Caco-2 (cell line): ENCODE measurements at regions of chr13 and their contacts with region 1.

Region 1: GRCh38 chr13:75876360-75877050 is 240.4 kb downstream of the LMO7 start:
- DNase-seq: peak; percentile 75 to 77
- H3K4me3 ChIP-seq: no peak overlapping the region
- H3K4me3 Mint-ChIP-seq: peak overlapping the region; percentile 23
- H3K27ac Mint-ChIP-seq: peak overlapping the region; percentile 33
- H3K4me1 ChIP-seq: peaks cover 10% of the 10 kb centered on the region
- H3K4me1 Mint-ChIP-seq: peaks cover 21% of the 10 kb centered on the region
- H3K27me3 ChIP-seq: no peaks in the 10 kb centered on the region
- H3K27me3 Mint-ChIP-seq: no peaks in the 10 kb centered on the region
- CTCF ChIP-seq: peak; percentile 89 to 95

Region 2: GRCh38 chr13:76016799-76017400 is 140.4 kb after region 1 on chr13:
- CTCF ChIA-PET with region 1: interaction called, 6 read pairs
- POLR2A ChIA-PET with region 1: no interaction called
- intact Hi-C with region 1: loop called (anchors 1 kb)
- DNase-seq: peak in 1 of 2 experiments; percentile 27
- H3K4me3 ChIP-seq: no peak overlapping the region
- H3K4me3 Mint-ChIP-seq: no peak overlapping the region
- H3K27ac Mint-ChIP-seq: peak overlapping the region; percentile 14
- H3K4me1 ChIP-seq: peaks cover 67% of the 10 kb centered on the region
- H3K4me1 Mint-ChIP-seq: peaks cover 40% of the 10 kb centered on the region
- H3K27me3 ChIP-seq: no peaks in the 10 kb centered on the region
- H3K27me3 Mint-ChIP-seq: no peaks in the 10 kb centered on the region
- CTCF ChIP-seq: peak in 1 of 2 experiments; percentile 44

Region 3: GRCh38 chr13:76048675-76049375 is 172.3 kb after region 1 on chr13:
- CTCF ChIA-PET with region 1: no interaction called
- POLR2A ChIA-PET with region 1: no interaction called
- intact Hi-C with region 1: loop called (anchors 1 kb)
- DNase-seq: peak in 1 of 2 experiments; percentile 29
- H3K4me3 ChIP-seq: no peak overlapping the region
- H3K4me3 Mint-ChIP-seq: peak overlapping the region; percentile 28
- H3K27ac Mint-ChIP-seq: peak overlapping the region; percentile 58
- H3K4me1 ChIP-seq: peaks cover 31% of the 10 kb centered on the region
- H3K4me1 Mint-ChIP-seq: peaks cover 19% of the 10 kb centered on the region
- H3K27me3 ChIP-seq: no peaks in the 10 kb centered on the region
- H3K27me3 Mint-ChIP-seq: no peaks in the 10 kb centered on the region
- CTCF ChIP-seq: no peak

Region 4: DNA sequence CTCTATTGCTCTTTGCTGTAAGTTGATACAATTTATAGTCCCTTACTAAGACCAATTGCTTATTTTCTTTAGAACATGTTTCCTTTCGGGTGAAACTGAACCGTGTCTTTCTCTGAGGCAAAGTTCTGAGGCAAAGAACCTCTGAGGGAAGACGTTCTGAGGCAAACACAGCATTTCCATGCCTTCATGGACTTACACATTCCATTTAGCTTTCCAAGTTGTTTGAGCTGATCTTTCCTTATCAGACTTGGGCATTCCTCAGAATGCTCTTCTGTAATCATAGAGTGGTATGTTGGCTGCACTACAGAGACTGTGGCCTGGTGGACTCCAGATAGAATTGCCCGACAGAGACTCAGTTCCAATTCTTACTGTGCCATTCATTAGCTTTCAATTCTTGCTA is 430.6 kb after region 1 on chr13:
- CTCF ChIA-PET with region 1: interaction called, 5 read pairs
- POLR2A ChIA-PET with region 1: no interaction called
- intact Hi-C with region 1: loop called (anchors 5 kb)
- DNase-seq: peak; percentile 55 to 59
- H3K4me3 ChIP-seq: no peak overlapping the region
- H3K4me3 Mint-ChIP-seq: peak overlapping the region; percentile 68
- H3K27ac Mint-ChIP-seq: peak overlapping the region; percentile 94
- H3K4me1 ChIP-seq: peaks cover 14% of the 10 kb centered on the region
- H3K4me1 Mint-ChIP-seq: peaks cover 10% of the 10 kb centered on the region
- H3K27me3 ChIP-seq: no peaks in the 10 kb centered on the region
- H3K27me3 Mint-ChIP-seq: no peaks in the 10 kb centered on the region
- CTCF ChIP-seq: peak in 1 of 2 experiments; percentile 18

Region 5: DNA sequence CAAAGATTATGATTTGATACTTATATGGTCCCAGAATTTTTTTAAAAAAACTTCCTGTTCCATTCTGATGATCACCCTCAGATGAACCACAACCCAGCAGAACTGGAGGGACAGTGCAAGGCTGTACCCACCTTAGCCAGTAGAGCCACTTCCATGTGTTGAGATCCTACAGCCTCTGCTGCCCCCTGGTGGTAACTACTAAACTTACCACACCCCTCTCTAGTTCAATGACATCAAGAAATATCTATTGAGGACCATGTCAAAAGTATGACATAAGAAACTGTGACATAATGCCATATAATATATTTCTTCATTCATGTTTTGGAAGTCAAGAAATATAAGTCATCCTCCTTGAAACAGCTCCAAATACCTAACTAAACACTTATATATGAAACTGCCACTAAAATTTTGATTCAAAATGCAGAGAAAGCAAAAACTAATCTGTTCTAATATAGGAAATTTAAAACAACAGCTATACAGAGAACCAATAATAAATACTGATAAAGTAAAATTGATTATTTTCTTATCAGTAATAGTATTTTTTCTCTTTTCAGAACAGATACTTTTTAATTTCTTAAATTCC is 597.1 kb after region 1 on chr13:
- CTCF ChIA-PET with region 1: no interaction called
- POLR2A ChIA-PET with region 1: no interaction called
- intact Hi-C with region 1: loop called (anchors 1 kb)
- DNase-seq: peak; percentile 81 to 85
- H3K4me3 ChIP-seq: no peak overlapping the region
- H3K4me3 Mint-ChIP-seq: no peak overlapping the region
- H3K27ac Mint-ChIP-seq: peak overlapping the region; percentile 7
- H3K4me1 ChIP-seq: no peaks in the 10 kb centered on the region
- H3K4me1 Mint-ChIP-seq: no peaks in the 10 kb centered on the region
- H3K27me3 ChIP-seq: no peaks in the 10 kb centered on the region
- H3K27me3 Mint-ChIP-seq: no peaks in the 10 kb centered on the region
- CTCF ChIP-seq: peak; percentile 84 to 94

Region 6: GRCh38 chr13:76632401-76633044 is 756.0 kb after region 1 on chr13:
- CTCF ChIA-PET with region 1: no interaction called
- POLR2A ChIA-PET with region 1: no interaction called
- intact Hi-C with region 1: no loop called
- DNase-seq: peak in 1 of 2 experiments; percentile 19
- H3K4me3 ChIP-seq: no peak overlapping the region
- H3K4me3 Mint-ChIP-seq: no peak overlapping the region
- H3K27ac Mint-ChIP-seq: no peak overlapping the region
- H3K4me1 ChIP-seq: no peaks in the 10 kb centered on the region
- H3K4me1 Mint-ChIP-seq: no peaks in the 10 kb centered on the region
- H3K27me3 ChIP-seq: no peaks in the 10 kb centered on the region
- H3K27me3 Mint-ChIP-seq: peaks cover 14% of the 10 kb centered on the region
- CTCF ChIP-seq: no peak

Region 7: GRCh38 chr13:76656500-76656899 is 780.0 kb after region 1 on chr13:
- CTCF ChIA-PET with region 1: no interaction called
- POLR2A ChIA-PET with region 1: no interaction called
- intact Hi-C with region 1: no loop called
- DNase-seq: no peak
- H3K4me3 ChIP-seq: no peak overlapping the region
- H3K4me3 Mint-ChIP-seq: no peak overlapping the region
- H3K27ac Mint-ChIP-seq: no peak overlapping the region
- H3K4me1 ChIP-seq: no peaks in the 10 kb centered on the region
- H3K4me1 Mint-ChIP-seq: no peaks in the 10 kb centered on the region
- H3K27me3 ChIP-seq: no peaks in the 10 kb centered on the region; the same call in 1 of the 2 replicates
- H3K27me3 Mint-ChIP-seq: peaks cover 7% of the 10 kb centered on the region
- CTCF ChIP-seq: no peak

Region 8: DNA sequence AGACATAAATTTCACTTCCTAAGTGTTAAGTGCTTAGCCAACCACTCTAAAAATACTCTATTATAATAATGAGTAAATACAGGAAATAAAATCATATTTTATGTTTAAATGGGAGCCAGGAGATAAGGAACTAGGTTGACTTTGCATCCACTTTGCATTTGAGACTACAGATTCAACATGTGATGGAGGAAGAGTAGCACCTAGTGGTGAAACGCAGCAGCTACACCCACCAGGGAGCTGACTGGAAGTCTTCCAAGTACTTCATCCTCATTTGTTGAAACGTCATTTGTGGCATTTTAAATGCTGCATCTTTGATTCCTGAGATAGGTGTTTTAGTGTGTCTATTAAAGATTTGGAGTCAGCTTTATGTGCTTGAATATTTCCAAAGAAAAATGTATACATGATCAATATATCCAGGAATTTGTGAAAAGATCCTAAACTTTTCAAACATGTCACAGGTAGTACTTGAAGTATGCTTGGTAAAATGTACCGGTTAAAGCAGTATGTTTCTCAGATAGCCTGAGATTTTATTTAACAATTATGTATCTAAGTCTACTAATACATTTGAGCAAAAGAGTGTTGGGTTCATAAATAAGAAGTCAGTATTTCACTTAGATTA is 1027.1 kb after region 1 on chr13:
- CTCF ChIA-PET with region 1: no interaction called
- POLR2A ChIA-PET with region 1: no interaction called
- intact Hi-C with region 1: loop called (anchors 1 kb)
- DNase-seq: peak; percentile 72 to 80
- H3K4me3 ChIP-seq: no peak overlapping the region
- H3K4me3 Mint-ChIP-seq: no peak overlapping the region
- H3K27ac Mint-ChIP-seq: no peak overlapping the region
- H3K4me1 ChIP-seq: no peaks in the 10 kb centered on the region
- H3K4me1 Mint-ChIP-seq: no peaks in the 10 kb centered on the region
- H3K27me3 ChIP-seq: no peaks in the 10 kb centered on the region; the same call in 1 of the 2 replicates
- H3K27me3 Mint-ChIP-seq: peaks cover 15% of the 10 kb centered on the region
- CTCF ChIP-seq: peak; percentile 91 to 99